Heart left ventricle (tissue), 16 donors: ENCODE measurements at regions of chr15 and their contacts with region 1.

Region 1: GRCh38 chr15:58227706-58228543 is 89.7 kb downstream of the AQP9 start:
- DNase-seq: peak; percentile 68 to 86 (median 71)
- ATAC-seq: peak; percentile 39 to 79 (median 66)
- H3K4me3 ChIP-seq: no peak overlapping the region
- H3K27ac ChIP-seq: peak overlapping the region in 11 of 12 donors; percentile 25 to 79 (median 67)
- H3K4me1 ChIP-seq: peaks cover 3 to 43% (median 27%) of the 10 kb centered on the region in 12 donors
- H3K27me3 ChIP-seq: no peaks in the 10 kb centered on the region
- CTCF ChIP-seq: peak; percentile 71 to 91 (median 84)
- POLR2A ChIP-seq: no peak

Region 2: DNA sequence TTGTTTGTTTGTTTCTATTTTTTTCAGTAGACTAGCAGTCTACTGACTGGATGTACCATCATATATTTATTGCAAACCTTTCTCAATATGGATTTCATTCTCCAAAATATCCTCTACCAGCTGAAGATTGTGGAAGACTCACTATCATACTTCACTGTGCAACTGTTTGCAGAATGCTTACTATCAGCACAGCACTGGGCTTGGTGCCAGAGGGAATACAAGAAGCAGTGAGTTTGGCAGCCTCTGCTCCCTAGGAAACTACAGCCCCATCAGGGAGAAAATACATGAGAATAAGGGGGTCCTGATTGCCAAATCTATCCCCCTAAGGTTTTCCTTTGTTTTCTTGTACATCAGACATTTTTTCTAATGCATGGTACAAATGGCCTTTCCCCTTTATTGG is 62.3 kb before region 1 on chr15:
- intact Hi-C with region 1: no loop called
- DNase-seq: peak in 4 of 5 donors; percentile 54 to 84 (median 70)
- ATAC-seq: peak; percentile 47 to 79 (median 74)
- H3K4me3 ChIP-seq: no peak overlapping the region
- H3K27ac ChIP-seq: no peak overlapping the region
- H3K4me1 ChIP-seq: peaks cover 0 to 9% (median 2%) of the 10 kb centered on the region in 12 donors
- H3K27me3 ChIP-seq: peaks cover 0 to 4% (median 0%) of the 10 kb centered on the region in 9 donors
- CTCF ChIP-seq: no peak
- POLR2A ChIP-seq: no peak

Region 3: GRCh38 chr15:58758138-58758537 is 530.2 kb after region 1 on chr15:
- intact Hi-C with region 1: loop called in 3 of 10 experiments (anchors 5 kb)
- DNase-seq: no peak
- ATAC-seq: peak in 2 of 4 donors; percentile 53 to 62
- H3K4me3 ChIP-seq: no peak overlapping the region
- H3K27ac ChIP-seq: no peak overlapping the region
- H3K4me1 ChIP-seq: no peaks in the 10 kb centered on the region
- H3K27me3 ChIP-seq: no peaks in the 10 kb centered on the region
- CTCF ChIP-seq: peak in 10 of 12 donors; percentile 10 to 48 (median 26)
- POLR2A ChIP-seq: no peak

Region 4: GRCh38 chr15:58864602-58865424 is 636.9 kb after region 1 on chr15:
- intact Hi-C with region 1: loop called in 1 of 10 experiments (anchors 10 kb)
- DNase-seq: peak; percentile 27 to 71 (median 62)
- ATAC-seq: peak; percentile 45 to 86 (median 80)
- H3K4me3 ChIP-seq: peak overlapping the region; percentile 20 to 61 (median 48)
- H3K27ac ChIP-seq: peak overlapping the region in 7 of 12 donors; percentile 20 to 52 (median 29)
- H3K4me1 ChIP-seq: peaks cover 0 to 11% (median 8%) of the 10 kb centered on the region in 12 donors
- H3K27me3 ChIP-seq: peaks cover 0 to 6% (median 0%) of the 10 kb centered on the region in 9 donors
- CTCF ChIP-seq: no peak
- POLR2A ChIP-seq: no peak

Region 5: GRCh38 chr15:58957101-58957973 is 729.4 kb after region 1 on chr15:
- intact Hi-C with region 1: loop called in 1 of 10 experiments (anchors 10 kb)
- DNase-seq: peak in 4 of 5 donors; percentile 31 to 49 (median 38)
- ATAC-seq: peak in 3 of 4 donors; percentile 57 to 67 (median 63)
- H3K4me3 ChIP-seq: no peak overlapping the region
- H3K27ac ChIP-seq: no peak overlapping the region
- H3K4me1 ChIP-seq: peaks cover 0 to 12% (median 0%) of the 10 kb centered on the region in 12 donors
- H3K27me3 ChIP-seq: no peaks in the 10 kb centered on the region
- CTCF ChIP-seq: peak; percentile 67 to 85 (median 73)
- POLR2A ChIP-seq: no peak